ENCODE measurements at regions of chr3 and their contacts with region 1.

Region 1: GRCh38 chr3:63993653-63994079 is 29.6 kb downstream of the PSMD6 start:
- DNase-seq: peak; percentile 85

Region 2: GRCh38 chr3:63886858-63887257 is 106.8 kb before region 1 on chr3:
- intact Hi-C with region 1: no loop called
- DNase-seq: no peak

Region 3: DNA sequence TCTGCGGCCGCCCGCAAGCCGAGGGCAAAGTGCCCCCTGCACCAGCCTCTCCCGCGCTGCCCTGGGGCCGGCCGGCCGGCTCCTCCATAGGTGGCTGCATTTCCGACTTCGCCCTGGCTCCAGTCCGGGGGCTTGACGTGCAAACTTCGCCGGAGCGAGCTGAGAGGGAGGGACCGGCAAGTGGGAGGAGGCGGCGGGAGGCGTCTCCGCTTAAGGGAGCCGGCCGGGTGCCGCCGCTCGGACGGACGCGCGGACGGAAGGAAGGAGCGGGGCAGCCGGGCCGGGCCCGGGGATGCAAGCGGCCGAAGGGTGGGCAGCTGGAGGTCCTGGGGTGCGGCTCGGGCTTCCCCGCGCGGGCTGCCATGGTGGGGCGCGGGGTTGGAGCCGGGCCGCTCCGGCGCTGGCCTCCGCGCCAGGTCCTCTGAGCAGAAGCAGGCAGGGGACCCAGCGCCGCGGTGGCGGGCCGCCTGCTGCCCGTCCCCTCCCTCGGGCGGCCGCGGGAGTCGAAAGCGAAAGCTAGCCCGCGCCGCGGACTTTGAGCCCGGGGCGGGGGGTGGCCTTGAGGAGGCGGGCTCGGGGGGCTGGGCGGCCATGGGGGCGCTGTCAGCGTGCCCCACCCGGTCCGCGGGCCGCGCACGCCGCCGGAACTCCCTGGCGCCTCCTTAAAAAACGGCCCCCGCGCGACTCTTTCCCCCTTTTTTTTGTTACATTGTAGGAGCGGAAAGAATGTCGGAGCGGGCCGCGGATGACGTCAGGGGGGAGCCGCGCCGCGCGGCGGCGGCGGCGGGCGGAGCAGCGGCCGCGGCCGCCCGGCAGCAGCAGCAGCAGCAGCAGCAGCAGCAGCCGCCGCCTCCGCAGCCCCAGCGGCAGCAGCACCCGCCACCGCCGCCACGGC is 81.5 kb before region 1 on chr3 and contains the start of gene SCAANT1:
- intact Hi-C with region 1: loop called (anchors 10 kb)
- DNase-seq: peak; percentile 97
- total RNA-seq, gene SCAANT1: not detected

Region 4: DNA sequence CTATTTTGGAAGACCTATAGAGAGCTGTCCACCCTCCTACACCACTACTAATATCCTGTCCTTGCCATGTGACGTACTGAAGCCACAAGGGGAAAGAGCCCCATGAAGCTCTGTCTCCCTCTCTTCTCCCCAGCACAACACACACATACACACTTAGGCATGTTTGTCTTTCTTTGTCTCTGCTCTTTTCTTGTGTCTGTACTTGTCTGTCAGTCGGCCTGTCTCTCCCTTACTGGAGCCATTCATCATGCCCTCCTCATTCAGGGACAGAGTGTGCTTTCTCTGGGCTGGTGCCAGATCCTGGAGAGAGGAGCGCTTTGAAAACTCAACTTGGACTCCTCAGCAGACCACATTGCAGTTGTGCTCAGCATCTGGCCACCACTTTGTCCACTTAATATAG is 17.9 kb before region 1 on chr3:
- intact Hi-C with region 1: loop called in 1 of 2 experiments (anchors 2 kb)
- DNase-seq: no peak

Measured in posterior vena cava (tissue), 2 donors.